HCT116 (cell line): ENCODE measurements at regions of chr9 and their contacts with region 1.

Region 1: DNA sequence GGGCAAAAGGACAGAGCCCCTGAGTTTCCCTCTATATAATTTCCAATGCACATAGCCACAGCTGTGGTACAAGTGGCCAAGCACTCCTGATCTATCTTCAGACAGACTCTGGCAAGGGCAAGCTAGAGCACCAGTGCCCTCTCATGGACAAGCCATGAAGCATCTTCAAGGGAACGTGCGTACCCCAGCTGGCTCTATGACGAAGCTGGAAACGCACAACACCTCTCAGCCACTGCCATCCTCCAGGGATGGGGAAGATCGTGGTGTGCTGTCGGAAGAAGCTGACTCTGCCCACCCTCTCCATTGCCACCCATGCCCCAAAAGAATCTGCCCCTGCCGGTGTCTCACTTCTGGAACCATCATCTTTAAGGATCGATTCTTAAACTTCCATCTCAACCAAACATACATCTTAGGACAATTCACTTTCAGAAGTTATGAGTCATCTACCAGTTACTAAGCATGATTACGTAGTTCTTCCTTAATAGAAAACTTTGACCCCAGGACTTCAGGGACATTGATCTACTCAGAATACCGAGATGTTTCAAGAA is 482.9 kb downstream of the AGTPBP1 start:
- DNase-seq: peak; percentile 63
- ATAC-seq: peak; percentile 100
- H3K4me3 ChIP-seq: no peak overlapping the region
- H3K27ac ChIP-seq: no peak overlapping the region
- H3K4me1 ChIP-seq: peaks cover 0 to 11% of the 10 kb centered on the region in 2 experiments; a peak in 1 of 4 replicates
- H3K27me3 ChIP-seq: 0 out of 2 replicates have a peak, but pooled peaks cover 6% of the 10 kb centered on the region
- CTCF ChIP-seq: peak; percentile 64 to 83 (median 82); a peak in 5 of 6 replicates
- POLR2A ChIP-seq: no peak
- RAD21 ChIP-seq: peak; percentile 90

Region 2: GRCh38 chr9:84404095-84404686 is 854.7 kb before region 1 on chr9:
- CTCF ChIA-PET with region 1: interaction called, 6 read pairs
- POLR2A ChIA-PET with region 1: no interaction called
- RAD21 ChIA-PET with region 1: no interaction called
- intact Hi-C with region 1: loop called (anchors 2 kb)
- DNase-seq: peak; percentile 8
- ATAC-seq: peak; percentile 69
- H3K4me3 ChIP-seq: no peak overlapping the region
- H3K27ac ChIP-seq: no peak overlapping the region
- H3K4me1 ChIP-seq: no peaks in the 10 kb centered on the region
- H3K27me3 ChIP-seq: no peaks in the 10 kb centered on the region
- CTCF ChIP-seq: peak; percentile 44 to 90 (median 77)
- POLR2A ChIP-seq: no peak
- RAD21 ChIP-seq: peak; percentile 69

Region 3: DNA sequence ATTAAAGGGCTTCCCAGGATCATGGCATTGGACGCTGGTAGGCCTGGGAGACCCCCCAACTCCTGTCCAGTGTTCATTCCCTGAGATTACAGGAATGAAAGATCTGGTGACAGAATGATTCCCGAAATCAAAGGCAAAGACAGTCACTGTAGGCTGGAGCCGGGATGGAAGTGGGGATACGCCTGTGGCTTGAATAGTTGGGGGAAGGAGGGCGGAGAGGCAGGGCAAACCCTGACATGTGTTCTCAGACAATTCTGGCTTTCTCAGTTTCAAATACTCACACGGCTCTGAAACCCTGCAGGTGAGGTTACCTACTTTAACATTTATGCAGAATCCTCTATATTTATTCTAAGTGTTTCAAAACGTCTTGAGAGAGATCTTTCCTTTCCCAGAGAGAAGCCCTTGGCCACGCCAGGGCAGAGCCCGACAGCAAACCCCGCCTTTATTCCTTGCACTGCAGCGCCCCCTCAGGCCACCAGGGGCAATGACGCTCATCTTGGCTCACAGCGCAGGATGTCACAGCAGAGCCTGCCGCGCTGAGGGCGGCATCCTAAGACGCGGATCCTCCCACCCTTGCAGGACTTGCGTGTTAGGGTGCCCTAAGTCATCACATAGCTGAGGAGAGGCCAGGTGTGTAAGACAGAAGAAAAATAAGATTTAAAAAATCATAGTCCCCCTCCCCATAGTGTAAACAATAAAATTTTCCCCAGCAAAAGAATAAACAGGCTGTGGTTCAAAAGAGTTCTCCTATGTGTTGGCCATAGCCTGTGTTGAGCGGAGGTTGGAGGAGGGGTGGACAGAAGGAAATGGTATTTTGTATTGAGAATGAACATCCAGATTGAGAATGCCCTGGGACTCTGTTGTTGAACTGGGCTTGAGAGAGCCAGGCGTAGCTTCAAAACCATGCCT is 304.8 kb before region 1 on chr9:
- CTCF ChIA-PET with region 1: no interaction called
- POLR2A ChIA-PET with region 1: no interaction called
- RAD21 ChIA-PET with region 1: no interaction called
- intact Hi-C with region 1: loop called (anchors 2 kb)
- DNase-seq: peak; percentile 48
- ATAC-seq: peak; percentile 99
- H3K4me3 ChIP-seq: no peak overlapping the region
- H3K27ac ChIP-seq: no peak overlapping the region
- H3K4me1 ChIP-seq: 0 out of 4 replicates have a peak, but pooled peaks cover 0 to 3% of the 10 kb centered on the region in 2 experiments
- H3K27me3 ChIP-seq: no peaks in the 10 kb centered on the region
- CTCF ChIP-seq: peak; percentile 77 to 96 (median 96)
- POLR2A ChIP-seq: no peak
- RAD21 ChIP-seq: peak; percentile 78

Region 4: DNA sequence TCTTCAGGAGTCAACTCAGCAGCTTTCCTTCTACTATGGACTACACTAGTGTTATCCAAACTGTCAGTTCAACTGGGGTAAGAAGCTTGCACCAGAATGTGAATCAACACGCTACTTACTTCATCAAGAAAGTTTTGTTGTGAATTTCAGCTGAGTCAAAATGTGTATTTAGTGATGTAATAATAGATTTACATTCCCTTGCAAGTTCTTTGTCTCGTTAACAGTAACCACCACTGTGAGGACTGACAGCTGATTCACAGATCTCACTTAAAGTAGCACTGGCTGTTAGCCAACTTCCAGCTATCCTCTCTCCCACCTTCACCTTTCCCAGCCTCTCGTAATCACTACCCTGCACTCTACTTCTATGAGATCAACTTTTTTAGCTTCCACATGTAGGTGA is 144.1 kb before region 1 on chr9:
- CTCF ChIA-PET with region 1: no interaction called
- POLR2A ChIA-PET with region 1: no interaction called
- RAD21 ChIA-PET with region 1: no interaction called
- intact Hi-C with region 1: loop called (anchors 10 kb)
- DNase-seq: no peak
- ATAC-seq: no peak
- H3K4me3 ChIP-seq: no peak overlapping the region
- H3K27ac ChIP-seq: no peak overlapping the region
- H3K4me1 ChIP-seq: no peaks in the 10 kb centered on the region
- H3K27me3 ChIP-seq: peaks cover 18% of the 10 kb centered on the region; the same call in 1 of the 2 replicates
- CTCF ChIP-seq: no peak
- POLR2A ChIP-seq: no peak
- RAD21 ChIP-seq: no peak

Region 5: DNA sequence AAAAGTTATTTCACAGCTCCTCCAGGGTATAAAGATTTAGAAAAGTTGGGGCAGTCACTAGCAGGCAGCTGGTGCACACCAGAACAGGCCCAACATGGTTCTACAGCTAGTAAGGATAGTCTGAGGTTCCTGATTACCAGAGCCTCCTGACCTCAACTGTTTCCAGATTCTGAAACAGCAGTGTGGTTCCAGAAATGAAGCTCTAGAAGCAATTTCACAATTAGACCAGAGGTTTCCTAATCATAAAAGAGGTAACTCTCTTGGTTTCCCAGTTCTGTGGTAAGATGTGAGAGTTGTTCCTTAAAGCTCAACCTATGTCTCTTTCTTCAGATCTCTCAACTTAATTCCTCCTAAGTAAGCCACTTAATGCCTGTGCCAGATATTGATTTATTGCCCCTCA is 471.0 kb after region 1 on chr9:
- CTCF ChIA-PET with region 1: no interaction called
- POLR2A ChIA-PET with region 1: no interaction called
- RAD21 ChIA-PET with region 1: no interaction called
- intact Hi-C with region 1: no loop called
- DNase-seq: no peak
- ATAC-seq: no peak
- H3K4me3 ChIP-seq: no peak overlapping the region
- H3K27ac ChIP-seq: no peak overlapping the region
- H3K4me1 ChIP-seq: no peaks in the 10 kb centered on the region
- H3K27me3 ChIP-seq: no peaks in the 10 kb centered on the region
- CTCF ChIP-seq: no peak
- POLR2A ChIP-seq: no peak
- RAD21 ChIP-seq: no peak